ENCODE measurements at regions of chr15 and their contacts with region 1.

Region 1: GRCh38 chr15:41989259-41989933 is 17.0 kb upstream of the EHD4 start:
- DNase-seq: peak; percentile 93
- ATAC-seq: peak; percentile 89

Region 2: GRCh38 chr15:42056934-42057779 is 67.8 kb after region 1 on chr15:
- intact Hi-C with region 1: loop called (anchors 2 kb)
- DNase-seq: peak; percentile 74
- ATAC-seq: peak; percentile 89

Region 3: DNA sequence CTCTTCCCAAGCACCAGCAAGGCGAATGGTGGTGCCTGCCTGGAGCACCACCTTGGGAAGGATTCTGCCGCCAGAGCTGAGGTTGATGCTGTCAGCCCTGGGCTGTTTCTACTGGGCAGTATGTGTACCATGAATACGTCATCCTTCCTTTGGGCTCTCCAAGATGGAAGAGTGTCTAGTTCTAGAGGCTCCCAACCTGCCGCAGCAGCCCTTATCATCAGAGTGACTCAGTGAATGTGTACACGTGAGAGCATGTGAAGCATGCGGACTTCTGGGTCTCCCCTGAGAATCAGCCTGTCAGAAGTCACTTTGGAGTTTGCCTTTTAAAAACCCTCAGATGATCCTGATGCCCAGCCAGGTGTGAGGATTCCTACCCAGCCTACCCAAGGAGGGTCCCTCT is 84.0 kb after region 1 on chr15:
- intact Hi-C with region 1: no loop called
- DNase-seq: no peak
- ATAC-seq: no peak

Region 4: GRCh38 chr15:42084460-42085235 is 95.3 kb after region 1 on chr15:
- intact Hi-C with region 1: loop called (anchors 10 kb)
- DNase-seq: peak; percentile 78
- ATAC-seq: peak; percentile 78